Mammary epithelial cell (primary cell): ENCODE measurements at regions of chr17 and their contacts with region 1.

Region 1: DNA sequence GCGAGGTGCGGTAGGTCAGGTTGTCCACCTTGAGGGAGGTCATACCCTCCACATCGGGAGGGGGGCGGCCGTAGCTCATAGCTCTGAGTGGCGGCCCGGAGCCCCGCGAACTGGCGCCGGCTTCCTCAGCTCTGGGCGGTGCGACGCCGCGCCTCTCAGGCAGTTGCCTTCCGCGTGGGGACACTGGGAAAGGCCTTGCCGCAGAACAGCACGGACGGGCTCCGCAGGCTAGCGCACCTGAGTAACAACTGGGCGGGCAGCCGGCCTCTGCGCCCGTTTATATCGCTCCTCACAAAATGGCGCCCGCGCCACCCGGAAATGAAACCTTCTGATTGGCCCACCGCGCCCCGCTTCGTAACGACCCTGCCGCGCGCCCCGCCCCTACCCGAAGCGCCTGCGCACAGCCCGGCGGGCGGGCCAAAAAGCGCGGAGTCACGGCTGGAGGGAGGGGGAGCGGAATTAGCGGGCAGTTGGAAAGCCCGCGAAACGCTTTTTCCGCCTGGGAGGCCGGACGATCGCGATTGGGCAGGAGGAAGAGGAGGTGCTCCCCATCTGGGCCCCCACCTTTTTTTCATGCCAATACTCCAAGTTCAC is at the start of gene SRSF2:
- DNase-seq: peak; percentile 99
- H3K4me3 ChIP-seq: peak within 1 kb of the TSS; percentile 98 to 100 (median 99)
- H3K27ac ChIP-seq: peak within 1 kb of the TSS; percentile 94
- H3K4me1 ChIP-seq: peaks cover 25% of the 10 kb centered on the region
- H3K27me3 ChIP-seq: no peaks in the 10 kb centered on the region
- CTCF ChIP-seq: no peak
- total RNA-seq, gene SRSF2: 110 to 196 TPM

Region 2: GRCh38 chr17:76834870-76835269 is 97.7 kb after region 1 on chr17:
- CTCF ChIA-PET with region 1: no interaction called
- dilution Hi-C with region 1: loop called (anchors 5 kb)
- in situ Hi-C with region 1: no loop called
- intact Hi-C with region 1: no loop called
- DNase-seq: no peak
- H3K4me3 ChIP-seq: no peak overlapping the region
- H3K27ac ChIP-seq: no peak overlapping the region
- H3K4me1 ChIP-seq: peaks cover 3% of the 10 kb centered on the region
- H3K27me3 ChIP-seq: no peaks in the 10 kb centered on the region
- CTCF ChIP-seq: no peak